ENCODE measurements at regions of chr18 and their contacts with region 1.

Region 1: DNA sequence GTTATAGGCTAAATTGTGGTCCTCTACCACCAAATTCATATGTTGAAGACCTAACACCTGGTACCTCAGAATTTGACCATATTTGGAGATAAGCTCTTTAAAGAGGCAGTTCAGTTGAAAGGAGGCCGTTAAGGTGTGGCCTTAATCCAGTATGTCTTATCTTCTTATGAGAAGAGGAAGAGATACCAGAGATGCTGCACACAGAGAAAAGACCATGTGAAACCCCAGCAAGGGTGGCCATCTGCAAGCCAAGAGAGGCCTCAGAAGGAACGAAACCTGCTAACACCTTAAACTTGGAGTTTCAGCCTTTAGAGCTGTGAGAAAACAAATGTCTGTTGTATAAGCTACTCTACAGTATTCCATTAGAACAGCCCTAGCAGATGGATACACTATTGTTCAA is 528.1 kb upstream of the DCC start:
- DNase-seq: no peak

Region 2: GRCh38 chr18:50895350-50896045 is 916.4 kb before region 1 on chr18:
- intact Hi-C with region 1: loop called in 1 of 2 experiments (anchors 5 kb)
- DNase-seq: no peak